Psoas muscle (tissue), 8 donors: ENCODE measurements at regions of chr1 and their contacts with region 1.

Region 1: GRCh38 chr1:20194757-20195461 is 8.6 kb upstream of the PLA2G2C start:
- DNase-seq: peak; percentile 65 to 82
- ATAC-seq: peak; percentile 83 to 95 (median 87)
- H3K4me3 ChIP-seq: no peak overlapping the region
- H3K27ac ChIP-seq: no peak overlapping the region
- H3K4me1 ChIP-seq: peaks cover 4% of the 10 kb centered on the region
- H3K27me3 ChIP-seq: peaks cover 0 to 2% (median 0%) of the 10 kb centered on the region in 3 donors
- CTCF ChIP-seq: peak; percentile 79

Region 2: DNA sequence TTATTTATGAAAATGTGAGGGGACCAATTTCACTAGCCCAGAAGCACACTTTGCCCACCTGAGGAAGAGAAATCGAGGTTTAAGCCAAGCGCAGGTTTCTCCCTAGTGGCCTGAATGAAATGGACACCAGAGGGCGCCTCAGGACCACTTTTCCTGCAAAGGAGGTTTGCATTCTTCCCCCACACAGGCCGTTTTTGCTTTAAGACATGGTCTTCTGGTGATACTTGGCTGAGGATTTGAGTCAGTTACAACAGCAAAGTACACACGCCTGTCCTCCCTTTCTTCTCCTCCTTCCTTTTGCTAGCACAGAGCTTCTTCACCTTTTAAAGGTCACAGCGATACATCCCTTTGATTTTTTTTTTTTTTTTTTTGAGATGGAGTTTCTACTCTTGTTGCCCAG is 276.9 kb before region 1 on chr1:
- intact Hi-C with region 1: loop called (anchors 2 kb)
- DNase-seq: peak; percentile 76 to 86
- ATAC-seq: peak; percentile 58 to 90 (median 72)
- H3K4me3 ChIP-seq: no peak overlapping the region
- H3K27ac ChIP-seq: no peak overlapping the region
- H3K4me1 ChIP-seq: no peaks in the 10 kb centered on the region
- H3K27me3 ChIP-seq: peaks cover 0 to 4% (median 0%) of the 10 kb centered on the region in 3 donors
- CTCF ChIP-seq: peak; percentile 88

Region 3: DNA sequence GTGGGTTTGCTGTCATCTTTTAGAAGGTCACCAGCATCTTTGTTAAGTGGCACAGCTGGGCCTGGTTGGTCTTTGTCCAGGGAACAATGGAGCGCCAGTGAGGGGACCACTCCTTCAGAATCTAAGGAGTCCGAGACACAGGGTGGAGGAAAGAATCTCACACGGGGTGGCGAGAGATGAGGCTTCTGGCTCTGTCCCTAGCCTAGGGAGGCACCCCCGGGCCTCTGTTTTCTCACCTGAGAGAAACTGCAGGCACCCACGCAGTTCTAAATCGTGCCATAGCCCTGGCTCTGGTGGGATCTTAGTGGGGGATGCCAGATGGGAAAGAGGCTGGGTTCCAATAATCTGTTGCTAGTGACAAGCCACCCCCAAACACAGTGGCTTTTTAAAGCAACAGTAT is 260.6 kb before region 1 on chr1:
- intact Hi-C with region 1: no loop called
- DNase-seq: no peak
- ATAC-seq: no peak
- H3K4me3 ChIP-seq: no peak overlapping the region
- H3K27ac ChIP-seq: no peak overlapping the region
- H3K4me1 ChIP-seq: no peaks in the 10 kb centered on the region
- H3K27me3 ChIP-seq: no peaks in the 10 kb centered on the region
- CTCF ChIP-seq: no peak

Region 4: GRCh38 chr1:19974822-19975416 is 220.0 kb before region 1 on chr1:
- intact Hi-C with region 1: loop called in 1 of 2 experiments (anchors 5 kb)
- DNase-seq: peak; percentile 42 to 60
- ATAC-seq: peak; percentile 57 to 82 (median 80)
- H3K4me3 ChIP-seq: no peak overlapping the region
- H3K27ac ChIP-seq: no peak overlapping the region
- H3K4me1 ChIP-seq: no peaks in the 10 kb centered on the region
- H3K27me3 ChIP-seq: peaks cover 0 to 30% (median 0%) of the 10 kb centered on the region in 3 donors
- CTCF ChIP-seq: peak; percentile 67

Region 5: DNA sequence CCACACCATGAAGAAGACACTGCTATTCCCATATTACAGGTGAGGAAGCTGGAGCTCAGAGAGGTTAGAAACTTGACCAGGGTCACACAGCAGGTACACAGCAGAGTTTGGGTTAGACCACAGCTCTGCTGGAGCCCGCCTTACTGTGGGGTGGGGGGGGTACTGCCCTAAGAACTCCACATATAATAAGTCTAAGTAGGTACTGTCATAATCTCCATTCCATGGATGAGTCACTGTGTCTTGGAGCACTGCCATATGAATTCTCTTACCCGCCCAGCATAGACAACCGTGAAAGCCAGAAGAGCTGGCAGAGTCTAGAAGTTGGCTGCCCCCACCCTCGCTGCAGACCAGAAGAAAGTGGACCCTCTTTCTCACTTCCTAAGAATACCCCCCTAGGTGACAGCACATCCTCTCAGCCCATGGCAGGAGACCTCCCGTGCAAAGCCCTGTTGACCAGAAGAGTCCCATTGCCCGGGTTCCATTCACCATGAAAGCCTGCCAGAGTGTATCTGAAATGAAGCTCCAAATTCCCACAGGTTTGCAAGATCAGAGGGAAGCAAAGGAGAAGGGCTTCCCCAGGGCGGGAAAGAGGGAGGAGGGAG is 70.4 kb before region 1 on chr1:
- intact Hi-C with region 1: no loop called
- DNase-seq: no peak
- ATAC-seq: peak; percentile 61 to 88 (median 75)
- H3K4me3 ChIP-seq: no peak overlapping the region
- H3K27ac ChIP-seq: no peak overlapping the region
- H3K4me1 ChIP-seq: no peaks in the 10 kb centered on the region
- H3K27me3 ChIP-seq: peaks cover 0 to 18% (median 3%) of the 10 kb centered on the region in 3 donors
- CTCF ChIP-seq: no peak

Region 6: GRCh38 chr1:20174937-20175666 is 19.8 kb before region 1 on chr1:
- intact Hi-C with region 1: no loop called
- DNase-seq: no peak
- ATAC-seq: no peak
- H3K4me3 ChIP-seq: no peak overlapping the region
- H3K27ac ChIP-seq: no peak overlapping the region
- H3K4me1 ChIP-seq: no peaks in the 10 kb centered on the region
- H3K27me3 ChIP-seq: no peaks in the 10 kb centered on the region
- CTCF ChIP-seq: no peak